ENCODE measurements at regions of chr4 and their contacts with region 1.

Region 1: GRCh38 chr4:55312489-55313101 is 33.4 kb upstream of the SRD5A3 start:
- DNase-seq: peak; percentile 20
- H3K4me3 Mint-ChIP-seq: no peak overlapping the region
- H3K27ac Mint-ChIP-seq: no peak overlapping the region
- H3K4me1 Mint-ChIP-seq: peaks cover 12% of the 10 kb centered on the region
- H3K27me3 Mint-ChIP-seq: peaks cover 3% of the 10 kb centered on the region

Region 2: GRCh38 chr4:55078987-55079386 is 233.6 kb before region 1 on chr4:
- intact Hi-C with region 1: loop called (anchors 10 kb)
- DNase-seq: no peak
- H3K4me3 Mint-ChIP-seq: no peak overlapping the region
- H3K27ac Mint-ChIP-seq: no peak overlapping the region
- H3K4me1 Mint-ChIP-seq: peaks cover 8% of the 10 kb centered on the region
- H3K27me3 Mint-ChIP-seq: no peaks in the 10 kb centered on the region

Region 3: GRCh38 chr4:55554453-55555030 is 241.9 kb after region 1 on chr4:
- intact Hi-C with region 1: loop called (anchors 1 kb)
- DNase-seq: no peak
- H3K4me3 Mint-ChIP-seq: no peak overlapping the region
- H3K27ac Mint-ChIP-seq: no peak overlapping the region
- H3K4me1 Mint-ChIP-seq: peaks cover 11% of the 10 kb centered on the region
- H3K27me3 Mint-ChIP-seq: peaks cover 12% of the 10 kb centered on the region

Region 4: GRCh38 chr4:55736605-55737183 is 424.1 kb after region 1 on chr4:
- intact Hi-C with region 1: loop called (anchors 2 kb)
- DNase-seq: no peak
- H3K4me3 Mint-ChIP-seq: no peak overlapping the region
- H3K27ac Mint-ChIP-seq: no peak overlapping the region
- H3K4me1 Mint-ChIP-seq: no peaks in the 10 kb centered on the region
- H3K27me3 Mint-ChIP-seq: peaks cover 16% of the 10 kb centered on the region

Measured in activated T-helper 1 cell treated with anti-CD3 and anti-CD28 coated beads, Interleukin-12 subunit alpha, Interleukin-12 subunit beta, Interleukin-2, Interleukin-4 antibody, amounts not matched to agents 30 ng/mL and 10 ng/mL and 1 ng/mL, durations not matched to agents 14 hours and 24 hours and 36 hours (primary cell).